CD4-positive, alpha-beta memory T cell (primary cell): ENCODE measurements at regions of chr12 and their contacts with region 1.

Region 1: GRCh38 chr12:8026291-8026900 is 6.1 kb upstream of the FOXJ2 start:
- DNase-seq: peak; percentile 97 to 99 (median 98)
- H3K4me3 ChIP-seq: peak overlapping the region; percentile 89 to 94
- H3K4me3 Mint-ChIP-seq: peak overlapping the region; percentile 90 to 99 (median 96)
- H3K27ac ChIP-seq: peak overlapping the region; percentile 99
- H3K27ac Mint-ChIP-seq: peak overlapping the region; percentile 96 to 100 (median 100)
- H3K4me1 ChIP-seq: peaks cover 14% of the 10 kb centered on the region
- H3K4me1 Mint-ChIP-seq: peaks cover 10 to 20% (median 15%) of the 10 kb centered on the region in 4 donors
- H3K27me3 ChIP-seq: no peaks in the 10 kb centered on the region
- H3K27me3 Mint-ChIP-seq: no peaks in the 10 kb centered on the region

Region 2: GRCh38 chr12:6554168-6555017 is 1472.0 kb before region 1 on chr12:
- CTCF ChIA-PET with region 1: no interaction called
- POLR2A ChIA-PET with region 1: no interaction called
- intact Hi-C with region 1: no loop called
- DNase-seq: peak; percentile 60 to 79 (median 63)
- H3K4me3 ChIP-seq: peak overlapping the region; percentile 71 to 73
- H3K4me3 Mint-ChIP-seq: peak overlapping the region; percentile 81 to 96 (median 88)
- H3K27ac ChIP-seq: peak overlapping the region; percentile 48
- H3K27ac Mint-ChIP-seq: peak overlapping the region; percentile 14 to 89 (median 70)
- H3K4me1 ChIP-seq: peaks cover 57% of the 10 kb centered on the region
- H3K4me1 Mint-ChIP-seq: peaks cover 28 to 64% (median 45%) of the 10 kb centered on the region in 4 donors
- H3K27me3 ChIP-seq: no peaks in the 10 kb centered on the region
- H3K27me3 Mint-ChIP-seq: no peaks in the 10 kb centered on the region

Region 3: DNA sequence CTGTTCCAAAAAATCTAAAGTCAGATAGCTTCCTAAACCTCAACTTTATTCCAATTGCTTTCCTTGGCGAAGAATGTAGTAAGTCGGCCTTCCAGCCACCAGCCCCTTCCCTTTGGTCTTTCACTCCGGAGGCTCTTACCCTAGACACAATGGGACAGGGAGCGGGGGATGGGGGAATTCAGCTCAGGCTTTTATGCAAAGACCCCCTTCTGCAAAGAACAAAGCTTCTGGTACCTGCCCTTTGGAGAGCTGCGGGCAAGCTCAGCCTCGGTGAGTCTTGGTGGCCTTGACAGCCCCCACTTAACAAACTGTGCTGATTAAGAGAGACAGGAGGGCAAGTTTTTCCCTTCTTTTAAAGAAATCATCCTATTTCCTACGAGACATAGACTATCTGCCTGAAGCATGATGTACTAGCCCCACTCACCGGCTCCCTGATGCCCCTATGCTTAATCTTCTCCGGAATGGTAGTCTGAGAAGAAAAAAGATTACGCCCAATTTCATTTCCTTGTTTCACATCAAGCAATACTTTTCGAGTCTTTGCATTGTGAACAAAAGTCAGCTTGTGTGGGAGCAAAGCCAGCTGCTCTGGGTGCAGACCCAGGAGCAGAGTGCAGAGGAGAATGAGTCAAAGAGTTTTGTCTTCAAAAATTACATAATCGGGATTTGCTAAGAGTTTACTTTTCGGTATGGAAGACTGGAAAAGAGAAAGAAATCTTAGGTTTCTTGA is 238.7 kb before region 1 on chr12:
- CTCF ChIA-PET with region 1: no interaction called
- POLR2A ChIA-PET with region 1: no interaction called
- intact Hi-C with region 1: no loop called
- DNase-seq: no peak
- H3K4me3 ChIP-seq: no peak overlapping the region
- H3K4me3 Mint-ChIP-seq: no peak overlapping the region
- H3K27ac ChIP-seq: no peak overlapping the region
- H3K27ac Mint-ChIP-seq: no peak overlapping the region
- H3K4me1 ChIP-seq: no peaks in the 10 kb centered on the region
- H3K4me1 Mint-ChIP-seq: no peaks in the 10 kb centered on the region
- H3K27me3 ChIP-seq: no peaks in the 10 kb centered on the region
- H3K27me3 Mint-ChIP-seq: peaks cover 16 to 28% of the 10 kb centered on the region in 2 donors

Region 4: GRCh38 chr12:7970475-7971252 is 55.7 kb before region 1 on chr12:
- CTCF ChIA-PET with region 1: interaction called, 3 read pairs
- POLR2A ChIA-PET with region 1: interaction called, 23 read pairs
- intact Hi-C with region 1: loop called (anchors 2 kb)
- DNase-seq: peak; percentile 83 to 90 (median 86)
- H3K4me3 ChIP-seq: peak overlapping the region; percentile 70 to 83
- H3K4me3 Mint-ChIP-seq: peak overlapping the region; percentile 82 to 95 (median 90)
- H3K27ac ChIP-seq: peak overlapping the region; percentile 93
- H3K27ac Mint-ChIP-seq: peak overlapping the region; percentile 92 to 100 (median 98)
- H3K4me1 ChIP-seq: peaks cover 34% of the 10 kb centered on the region
- H3K4me1 Mint-ChIP-seq: peaks cover 15 to 29% (median 24%) of the 10 kb centered on the region in 4 donors
- H3K27me3 ChIP-seq: no peaks in the 10 kb centered on the region
- H3K27me3 Mint-ChIP-seq: peaks cover 0 to 3% of the 10 kb centered on the region in 2 donors

Region 5: DNA sequence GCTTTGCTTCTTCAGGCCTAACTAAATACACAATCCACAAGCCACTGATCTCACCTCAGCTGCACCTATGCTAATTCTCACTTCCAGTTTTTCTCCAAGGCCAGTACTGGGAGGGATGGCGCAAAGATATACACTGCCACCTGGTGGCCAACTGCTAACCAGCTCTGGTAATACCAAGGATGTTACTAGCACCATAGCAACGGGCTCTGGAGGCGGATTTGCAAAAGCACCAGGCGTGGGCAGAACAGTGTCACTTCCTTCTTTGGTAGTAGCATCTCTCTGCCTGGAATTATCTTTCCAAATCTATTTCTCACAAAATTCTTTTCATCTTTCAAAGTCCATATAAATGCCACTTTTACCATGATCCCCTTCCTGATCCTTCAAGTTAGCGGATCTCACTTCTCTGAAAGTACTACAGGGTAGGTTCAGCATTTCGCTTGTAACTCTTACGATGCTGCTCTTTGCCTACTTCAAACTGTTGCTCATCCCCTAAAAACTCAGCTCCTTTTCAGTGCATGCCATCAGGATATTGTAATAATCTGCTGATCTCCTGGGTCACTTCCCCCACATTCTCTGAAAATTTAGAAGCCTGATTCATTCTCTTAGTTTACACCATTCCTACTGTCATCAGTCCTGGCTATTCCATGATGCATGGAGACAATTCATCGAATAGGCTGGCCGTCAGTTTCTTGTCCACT is 31.0 kb before region 1 on chr12:
- CTCF ChIA-PET with region 1: interaction called, 3 read pairs
- POLR2A ChIA-PET with region 1: interaction called, 3 read pairs
- intact Hi-C with region 1: loop called (anchors 1 kb)
- DNase-seq: peak; percentile 81 to 90 (median 86)
- H3K4me3 ChIP-seq: no peak overlapping the region
- H3K4me3 Mint-ChIP-seq: no peak overlapping the region
- H3K27ac ChIP-seq: peak overlapping the region; percentile 1
- H3K27ac Mint-ChIP-seq: no peak overlapping the region
- H3K4me1 ChIP-seq: peaks cover 27% of the 10 kb centered on the region
- H3K4me1 Mint-ChIP-seq: peaks cover 9 to 14% (median 12%) of the 10 kb centered on the region in 4 donors
- H3K27me3 ChIP-seq: no peaks in the 10 kb centered on the region
- H3K27me3 Mint-ChIP-seq: no peaks in the 10 kb centered on the region

Region 6: DNA sequence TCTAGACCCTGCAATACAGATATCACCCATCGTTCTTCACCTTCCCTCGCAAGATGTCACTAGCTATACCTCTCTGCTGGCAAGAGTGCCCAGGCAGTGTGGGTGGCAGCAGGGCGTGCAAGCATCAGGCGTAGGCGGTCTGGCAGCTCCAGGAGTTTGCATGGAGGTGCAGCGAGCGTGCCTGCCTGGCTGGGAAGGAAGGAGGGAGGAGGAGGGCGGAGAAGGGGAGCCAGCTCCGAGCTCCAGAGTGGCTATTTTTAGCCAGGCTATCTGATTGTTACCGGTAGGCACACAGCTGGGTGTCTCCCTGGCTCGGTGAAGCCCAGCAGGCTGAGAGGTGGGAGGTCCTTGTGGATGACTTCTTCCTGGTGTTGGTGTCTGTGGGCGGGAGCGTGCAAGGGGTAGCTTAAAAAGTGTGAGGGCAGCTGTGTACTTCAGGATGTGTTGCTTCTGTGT is 12.3 kb after region 1 on chr12:
- CTCF ChIA-PET with region 1: interaction called, 8 read pairs
- POLR2A ChIA-PET with region 1: interaction called, 40 read pairs
- intact Hi-C with region 1: loop called (anchors 1 kb)
- DNase-seq: peak in 1 of 5 donors; percentile 48
- H3K4me3 ChIP-seq: peak overlapping the region in 1 of 2 donors; percentile 28
- H3K4me3 Mint-ChIP-seq: peak overlapping the region; percentile 53 to 92 (median 75)
- H3K27ac ChIP-seq: peak overlapping the region; percentile 42
- H3K27ac Mint-ChIP-seq: peak overlapping the region; percentile 21 to 96 (median 64)
- H3K4me1 ChIP-seq: peaks cover 59% of the 10 kb centered on the region
- H3K4me1 Mint-ChIP-seq: peaks cover 50 to 62% (median 57%) of the 10 kb centered on the region in 4 donors
- H3K27me3 ChIP-seq: no peaks in the 10 kb centered on the region
- H3K27me3 Mint-ChIP-seq: no peaks in the 10 kb centered on the region

Region 7: GRCh38 chr12:8045952-8046944 is 19.9 kb after region 1 on chr12:
- CTCF ChIA-PET with region 1: interaction called, 4 read pairs
- POLR2A ChIA-PET with region 1: interaction called, 4 read pairs
- intact Hi-C with region 1: loop called (anchors 1 kb)
- DNase-seq: peak; percentile 77 to 82 (median 78)
- H3K4me3 ChIP-seq: no peak overlapping the region
- H3K4me3 Mint-ChIP-seq: peak overlapping the region in 1 of 8 donors; percentile 36
- H3K27ac ChIP-seq: no peak overlapping the region
- H3K27ac Mint-ChIP-seq: peak overlapping the region; percentile 3 to 76 (median 66)
- H3K4me1 ChIP-seq: peaks cover 6% of the 10 kb centered on the region
- H3K4me1 Mint-ChIP-seq: peaks cover 7 to 16% (median 8%) of the 10 kb centered on the region in 4 donors
- H3K27me3 ChIP-seq: no peaks in the 10 kb centered on the region
- H3K27me3 Mint-ChIP-seq: no peaks in the 10 kb centered on the region

Region 8: GRCh38 chr12:8065991-8066594 is 39.7 kb after region 1 on chr12 and contains the start of gene C3AR1:
- CTCF ChIA-PET with region 1: no interaction called
- POLR2A ChIA-PET with region 1: interaction called, 14 read pairs
- intact Hi-C with region 1: loop called (anchors 1 kb)
- DNase-seq: peak; percentile 68 to 85 (median 76)
- H3K4me3 ChIP-seq: peak within 1 kb of the TSS in 1 of 2 donors; percentile 16
- H3K4me3 Mint-ChIP-seq: peak within 1 kb of the TSS; percentile 39 to 83 (median 79)
- H3K27ac ChIP-seq: peak within 1 kb of the TSS; percentile 44
- H3K27ac Mint-ChIP-seq: peak within 1 kb of the TSS; percentile 80 to 98 (median 94)
- H3K4me1 ChIP-seq: peaks cover 34% of the 10 kb centered on the region
- H3K4me1 Mint-ChIP-seq: peaks cover 27 to 55% (median 40%) of the 10 kb centered on the region in 4 donors
- H3K27me3 ChIP-seq: no peaks in the 10 kb centered on the region
- H3K27me3 Mint-ChIP-seq: no peaks in the 10 kb centered on the region
- total RNA-seq, gene C3AR1: 4.6 to 6.1 TPM

Region 9: DNA sequence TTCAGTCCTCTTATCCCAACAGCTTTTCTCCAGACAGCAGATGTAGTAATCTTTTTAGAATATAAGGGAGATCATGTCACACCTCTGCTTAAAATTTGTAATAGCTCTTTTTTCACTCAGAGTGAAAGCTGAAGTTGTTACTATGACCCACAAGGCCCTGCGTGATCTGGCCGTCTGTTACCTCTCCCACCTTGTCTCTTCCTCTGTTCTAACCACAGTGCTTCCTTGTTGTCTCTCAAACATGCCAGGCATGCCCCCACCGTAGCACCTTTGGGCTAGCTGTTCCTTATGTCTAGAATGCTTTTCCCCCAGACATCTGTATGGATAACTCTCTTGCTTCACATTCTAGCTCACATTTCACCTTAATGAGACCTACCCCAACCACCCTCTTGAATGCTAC is 62.2 kb after region 1 on chr12:
- CTCF ChIA-PET with region 1: interaction called, 85 read pairs
- POLR2A ChIA-PET with region 1: interaction called, 11 read pairs
- intact Hi-C with region 1: no loop called
- DNase-seq: peak; percentile 35 to 65 (median 52)
- H3K4me3 ChIP-seq: peak overlapping the region in 1 of 2 donors; percentile 26
- H3K4me3 Mint-ChIP-seq: peak overlapping the region; percentile 70 to 86 (median 82)
- H3K27ac ChIP-seq: peak overlapping the region; percentile 58
- H3K27ac Mint-ChIP-seq: peak overlapping the region; percentile 85 to 96 (median 94)
- H3K4me1 ChIP-seq: peaks cover 60% of the 10 kb centered on the region
- H3K4me1 Mint-ChIP-seq: peaks cover 37 to 59% (median 41%) of the 10 kb centered on the region in 4 donors
- H3K27me3 ChIP-seq: no peaks in the 10 kb centered on the region
- H3K27me3 Mint-ChIP-seq: no peaks in the 10 kb centered on the region